Activated CD4-positive, alpha-beta T cell treated with anti-CD3 and anti-CD28 coated beads for 36 hours (primary cell): ENCODE measurements at regions of chr12 and their contacts with region 1.

Region 1: DNA sequence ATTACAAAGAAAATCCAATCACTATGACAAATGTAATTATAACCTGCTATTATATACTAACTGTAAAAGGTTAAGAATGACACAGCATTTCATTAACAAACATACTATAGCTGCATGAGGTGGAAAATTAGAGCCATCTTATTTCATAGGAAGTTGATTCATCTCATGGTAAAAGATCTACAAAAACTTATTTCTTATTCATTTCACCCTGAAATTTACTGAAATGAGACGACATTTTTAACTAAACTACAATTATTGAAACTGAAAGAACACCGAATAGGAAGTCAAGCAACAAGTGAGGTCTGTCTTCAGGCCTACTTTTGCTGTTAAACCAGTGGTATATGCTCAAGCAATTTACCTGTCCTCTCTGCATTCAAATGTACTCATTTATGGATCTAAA is 87.2 kb downstream of the CEP83 start:
- DNase-seq: no peak
- ATAC-seq: peak; percentile 93
- H3K4me3 Mint-ChIP-seq: no peak overlapping the region
- H3K27ac Mint-ChIP-seq: peak overlapping the region; percentile 80
- H3K4me1 Mint-ChIP-seq: peaks cover 26% of the 10 kb centered on the region
- H3K27me3 Mint-ChIP-seq: no peaks in the 10 kb centered on the region

Region 2: GRCh38 chr12:93825931-93826555 is 546.4 kb before region 1 on chr12:
- CTCF ChIA-PET with region 1: no interaction called
- POLR2A ChIA-PET with region 1: no interaction called
- intact Hi-C with region 1: no loop called
- DNase-seq: no peak
- ATAC-seq: no peak
- H3K4me3 Mint-ChIP-seq: no peak overlapping the region
- H3K27ac Mint-ChIP-seq: no peak overlapping the region
- H3K4me1 Mint-ChIP-seq: peaks cover 2% of the 10 kb centered on the region
- H3K27me3 Mint-ChIP-seq: no peaks in the 10 kb centered on the region

Region 3: DNA sequence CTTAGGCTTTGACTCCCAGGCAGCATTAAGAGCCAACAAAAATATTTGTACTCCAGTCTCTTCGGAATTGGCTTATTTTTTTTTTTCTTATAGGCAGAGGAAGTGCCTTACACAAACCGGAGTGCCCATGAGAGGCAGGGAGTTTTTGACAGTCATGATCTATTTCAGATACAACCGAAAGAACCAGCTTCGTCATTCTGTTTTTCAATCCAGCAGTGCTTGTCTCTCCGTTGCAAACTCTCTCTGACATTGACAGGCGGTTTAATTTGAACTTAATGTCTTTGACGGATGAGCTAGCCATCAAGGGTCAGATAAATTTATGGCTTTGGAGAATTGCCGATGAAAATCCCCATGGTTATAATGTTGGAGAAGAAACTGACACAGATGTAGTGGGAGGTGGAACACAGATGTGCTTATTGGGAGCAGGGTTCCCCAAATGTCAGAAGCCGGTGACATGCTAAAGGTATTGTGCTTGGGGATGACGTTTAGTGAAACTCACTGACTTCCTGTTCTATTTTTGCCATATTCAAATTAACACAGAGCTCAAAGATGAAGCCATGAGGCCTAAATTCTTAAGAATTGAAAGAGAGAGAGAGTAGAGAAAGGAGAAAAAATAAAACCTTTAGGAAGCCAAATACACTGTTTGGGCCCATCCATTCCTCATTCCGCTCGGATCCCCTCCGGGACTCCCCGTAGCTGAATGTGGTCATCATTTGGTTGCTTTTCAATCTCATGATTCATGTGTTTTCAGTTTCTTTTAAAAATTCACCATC is 164.4 kb before region 1 on chr12:
- CTCF ChIA-PET with region 1: no interaction called
- POLR2A ChIA-PET with region 1: interaction called, 3 read pairs
- intact Hi-C with region 1: loop called in 1 of 2 experiments (anchors 1 kb)
- DNase-seq: peak; percentile 62
- ATAC-seq: peak; percentile 80
- H3K4me3 Mint-ChIP-seq: peak overlapping the region; percentile 68
- H3K27ac Mint-ChIP-seq: peak overlapping the region; percentile 99
- H3K4me1 Mint-ChIP-seq: peaks cover 51% of the 10 kb centered on the region
- H3K27me3 Mint-ChIP-seq: no peaks in the 10 kb centered on the region

Region 4: DNA sequence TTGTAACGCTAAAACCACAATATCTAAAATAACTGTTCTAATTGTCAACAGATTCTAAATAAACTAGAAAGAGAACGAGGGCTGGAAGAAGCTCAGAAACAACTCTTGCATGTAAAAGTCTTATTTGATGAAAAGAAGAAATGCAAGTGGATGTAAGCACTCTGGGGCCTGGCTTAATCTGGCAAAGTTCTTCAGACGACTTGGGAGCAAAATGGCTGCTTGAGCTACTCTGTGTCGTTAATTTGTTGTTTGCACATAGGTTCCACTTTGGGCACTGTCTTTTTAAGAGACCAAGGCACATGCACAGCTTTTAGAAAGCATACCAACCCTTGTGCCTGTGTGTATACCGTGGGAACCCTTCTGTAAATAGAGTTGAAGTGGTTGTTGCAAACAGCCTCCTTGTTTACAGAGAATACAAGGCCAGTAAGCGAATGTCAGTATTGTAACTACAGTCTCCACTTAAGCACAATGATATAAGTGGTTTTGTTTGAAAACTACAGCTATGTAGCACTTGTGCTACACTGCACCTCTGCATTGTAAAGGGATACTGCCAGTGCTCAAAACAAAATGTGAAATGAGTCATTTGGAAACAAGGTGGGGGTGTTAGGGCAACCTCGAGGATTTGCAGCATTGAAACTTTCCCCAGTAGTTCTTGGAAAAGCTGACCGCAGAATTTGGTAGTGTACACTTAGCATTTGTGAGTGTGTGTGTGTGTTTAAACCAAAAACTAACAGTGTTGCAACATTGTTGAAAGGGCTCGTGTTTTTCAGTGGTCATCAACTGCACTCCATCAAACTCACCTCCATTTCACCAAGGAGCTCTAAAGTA is 67.1 kb before region 1 on chr12:
- CTCF ChIA-PET with region 1: interaction called, 4 read pairs
- POLR2A ChIA-PET with region 1: no interaction called
- intact Hi-C with region 1: loop called (anchors 1 to 2 kb)
- DNase-seq: peak; percentile 68
- ATAC-seq: peak; percentile 93
- H3K4me3 Mint-ChIP-seq: peak overlapping the region; percentile 5
- H3K27ac Mint-ChIP-seq: peak overlapping the region; percentile 70
- H3K4me1 Mint-ChIP-seq: peaks cover 30% of the 10 kb centered on the region
- H3K27me3 Mint-ChIP-seq: no peaks in the 10 kb centered on the region

Region 5: DNA sequence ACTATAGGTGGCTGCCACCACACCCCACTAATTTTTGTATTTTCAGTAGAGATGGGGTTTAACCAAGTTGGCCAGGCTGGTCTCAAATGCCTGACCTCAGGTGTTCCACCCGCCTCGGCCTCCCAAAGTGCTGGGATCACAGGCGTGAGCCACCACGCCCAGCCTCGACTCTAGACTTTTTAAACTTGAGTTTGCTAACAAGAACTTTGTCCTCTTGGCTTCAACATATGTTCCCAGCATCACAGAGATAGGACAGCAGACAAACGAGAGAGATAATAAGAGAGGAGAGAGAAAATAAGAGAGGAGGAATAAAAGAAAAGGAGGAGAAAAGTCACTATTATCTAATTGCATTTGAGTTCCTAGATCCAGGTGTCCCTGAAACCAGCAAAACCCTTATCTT is 31.9 kb before region 1 on chr12:
- CTCF ChIA-PET with region 1: no interaction called
- POLR2A ChIA-PET with region 1: no interaction called
- intact Hi-C with region 1: no loop called
- DNase-seq: no peak
- ATAC-seq: no peak
- H3K4me3 Mint-ChIP-seq: no peak overlapping the region
- H3K27ac Mint-ChIP-seq: no peak overlapping the region
- H3K4me1 Mint-ChIP-seq: no peaks in the 10 kb centered on the region
- H3K27me3 Mint-ChIP-seq: no peaks in the 10 kb centered on the region

Region 6: GRCh38 chr12:94427501-94428381 is 55.3 kb after region 1 on chr12:
- CTCF ChIA-PET with region 1: no interaction called
- POLR2A ChIA-PET with region 1: no interaction called
- intact Hi-C with region 1: loop called in 1 of 2 experiments (anchors 2 kb)
- DNase-seq: peak; percentile 17
- ATAC-seq: peak; percentile 86
- H3K4me3 Mint-ChIP-seq: peak overlapping the region; percentile 25
- H3K27ac Mint-ChIP-seq: peak overlapping the region; percentile 74
- H3K4me1 Mint-ChIP-seq: peaks cover 33% of the 10 kb centered on the region
- H3K27me3 Mint-ChIP-seq: no peaks in the 10 kb centered on the region

Region 7: DNA sequence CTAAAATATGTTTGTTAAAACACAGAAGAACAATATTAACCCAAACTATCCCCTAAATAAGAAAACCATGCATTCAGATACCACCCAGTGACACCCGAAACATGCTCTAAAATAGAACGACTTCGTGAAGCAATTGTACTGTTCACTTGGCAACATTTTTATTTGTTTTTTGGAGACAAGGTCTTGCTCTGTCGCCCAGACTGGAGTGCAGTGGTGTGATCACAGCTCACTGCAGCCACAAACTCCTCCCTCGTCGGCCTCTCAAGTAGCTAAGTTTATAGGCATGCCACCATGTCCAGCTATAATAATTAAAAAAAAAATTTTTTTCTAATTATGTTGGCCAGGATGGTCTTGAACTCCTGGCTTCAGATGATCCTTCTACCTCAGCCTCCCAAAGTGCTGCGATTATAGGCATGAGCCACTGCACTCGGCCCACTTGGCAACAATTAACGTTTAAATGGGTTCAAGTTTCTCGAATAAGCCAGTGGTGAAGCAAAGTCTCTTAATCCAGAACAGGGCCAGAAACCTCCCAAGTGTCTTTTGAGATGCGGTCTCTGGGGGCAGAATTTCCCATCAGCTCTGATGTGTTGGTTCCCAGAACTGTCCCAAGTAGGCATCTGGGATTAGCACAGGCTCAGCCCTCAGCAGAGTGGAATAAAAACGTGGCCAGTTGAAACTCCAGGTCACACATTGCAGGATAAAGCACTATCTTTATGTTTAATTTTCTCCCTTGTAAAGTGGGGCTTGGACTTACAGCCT is 203.4 kb after region 1 on chr12:
- CTCF ChIA-PET with region 1: no interaction called
- POLR2A ChIA-PET with region 1: no interaction called
- intact Hi-C with region 1: no loop called
- DNase-seq: no peak
- ATAC-seq: no peak
- H3K4me3 Mint-ChIP-seq: no peak overlapping the region
- H3K27ac Mint-ChIP-seq: no peak overlapping the region
- H3K4me1 Mint-ChIP-seq: no peaks in the 10 kb centered on the region
- H3K27me3 Mint-ChIP-seq: peaks cover 4% of the 10 kb centered on the region

Region 8: DNA sequence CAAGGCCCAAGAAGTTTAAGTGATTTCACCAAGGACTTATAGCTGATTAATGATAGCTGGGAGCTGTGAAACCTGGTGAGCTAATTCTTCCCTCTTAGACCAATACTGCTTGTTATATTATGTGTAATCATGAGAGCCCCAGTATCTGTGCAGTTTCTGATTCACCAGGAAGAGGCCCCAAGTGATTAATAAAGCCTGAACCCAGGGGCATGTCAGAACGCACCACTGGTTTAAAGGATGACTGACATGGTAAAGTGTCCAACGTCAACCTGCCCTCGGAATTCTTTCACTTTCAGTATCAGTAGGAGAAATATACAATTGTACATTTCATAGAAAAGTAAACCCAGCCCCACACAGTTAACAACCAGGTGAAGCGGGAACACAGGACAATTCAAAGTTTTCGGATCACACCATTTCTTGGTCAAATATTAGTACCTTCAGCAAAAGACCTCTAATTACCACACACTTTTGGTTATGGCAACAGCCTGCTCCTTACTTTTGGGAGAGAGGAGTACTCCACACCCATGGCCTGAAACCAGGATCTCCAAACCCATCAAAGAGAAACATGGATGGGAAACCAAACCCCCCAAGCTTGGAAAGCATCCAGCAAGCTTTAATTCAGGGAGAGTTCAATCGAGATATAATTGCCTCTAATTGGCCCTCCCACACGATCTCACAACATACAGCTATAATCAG is 249.4 kb after region 1 on chr12:
- CTCF ChIA-PET with region 1: no interaction called
- POLR2A ChIA-PET with region 1: no interaction called
- intact Hi-C with region 1: loop called in 1 of 2 experiments (anchors 5 kb)
- DNase-seq: peak; percentile 66
- ATAC-seq: peak; percentile 95
- H3K4me3 Mint-ChIP-seq: peak overlapping the region; percentile 25
- H3K27ac Mint-ChIP-seq: peak overlapping the region; percentile 67
- H3K4me1 Mint-ChIP-seq: peaks cover 22% of the 10 kb centered on the region
- H3K27me3 Mint-ChIP-seq: no peaks in the 10 kb centered on the region